Head of caudate nucleus (tissue), 42 donors: ENCODE measurements at regions of chr4 and their contacts with region 1.

Region 1: DNA sequence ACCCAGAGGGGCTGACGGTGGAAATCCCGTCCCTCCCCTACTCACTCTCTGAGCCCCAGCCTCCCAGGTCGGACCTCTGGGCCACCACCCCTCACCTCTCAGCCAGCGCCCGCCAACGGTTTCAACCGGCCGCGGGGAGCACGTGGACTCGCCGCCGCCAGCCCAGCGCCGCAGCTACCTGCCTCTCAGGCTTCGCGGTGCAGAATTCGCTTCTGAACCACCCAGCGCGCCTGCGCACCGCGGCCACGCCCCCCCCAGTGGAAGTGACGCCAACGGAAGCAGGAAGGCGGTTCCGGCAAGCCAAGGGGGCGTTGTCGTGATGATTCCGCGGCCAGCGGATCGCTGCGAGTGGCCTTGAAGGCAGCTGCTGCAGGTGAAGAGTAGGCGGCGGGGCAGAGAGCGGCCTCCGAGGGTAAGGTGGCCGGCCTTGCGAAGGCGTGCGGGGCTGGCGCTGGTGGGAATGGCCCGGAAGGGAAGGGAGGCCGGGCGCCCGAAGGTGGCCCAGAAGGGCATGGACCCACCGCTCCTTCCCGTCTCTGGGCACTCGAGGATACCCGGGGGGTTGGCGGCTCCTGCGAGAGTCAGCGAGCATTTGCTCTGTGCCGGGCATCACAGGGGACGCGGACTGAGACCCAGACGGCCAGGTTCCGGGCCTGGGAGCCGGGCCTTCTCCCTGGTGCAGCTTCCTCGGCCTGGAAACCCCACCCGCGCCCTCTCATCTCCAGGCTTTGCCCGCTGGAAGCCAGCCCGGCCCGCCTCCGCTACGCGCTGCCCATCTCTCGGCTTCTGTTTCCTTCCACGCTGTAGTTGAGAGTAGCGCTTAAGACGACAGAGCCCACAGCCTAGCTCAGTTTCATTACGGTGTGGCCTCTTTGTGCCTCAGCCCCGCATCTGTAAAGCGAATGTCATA is at the starts of genes LYAR and ZBTB49:
- DNase-seq: peak; percentile 84 to 97 (median 94)

Region 2: DNA sequence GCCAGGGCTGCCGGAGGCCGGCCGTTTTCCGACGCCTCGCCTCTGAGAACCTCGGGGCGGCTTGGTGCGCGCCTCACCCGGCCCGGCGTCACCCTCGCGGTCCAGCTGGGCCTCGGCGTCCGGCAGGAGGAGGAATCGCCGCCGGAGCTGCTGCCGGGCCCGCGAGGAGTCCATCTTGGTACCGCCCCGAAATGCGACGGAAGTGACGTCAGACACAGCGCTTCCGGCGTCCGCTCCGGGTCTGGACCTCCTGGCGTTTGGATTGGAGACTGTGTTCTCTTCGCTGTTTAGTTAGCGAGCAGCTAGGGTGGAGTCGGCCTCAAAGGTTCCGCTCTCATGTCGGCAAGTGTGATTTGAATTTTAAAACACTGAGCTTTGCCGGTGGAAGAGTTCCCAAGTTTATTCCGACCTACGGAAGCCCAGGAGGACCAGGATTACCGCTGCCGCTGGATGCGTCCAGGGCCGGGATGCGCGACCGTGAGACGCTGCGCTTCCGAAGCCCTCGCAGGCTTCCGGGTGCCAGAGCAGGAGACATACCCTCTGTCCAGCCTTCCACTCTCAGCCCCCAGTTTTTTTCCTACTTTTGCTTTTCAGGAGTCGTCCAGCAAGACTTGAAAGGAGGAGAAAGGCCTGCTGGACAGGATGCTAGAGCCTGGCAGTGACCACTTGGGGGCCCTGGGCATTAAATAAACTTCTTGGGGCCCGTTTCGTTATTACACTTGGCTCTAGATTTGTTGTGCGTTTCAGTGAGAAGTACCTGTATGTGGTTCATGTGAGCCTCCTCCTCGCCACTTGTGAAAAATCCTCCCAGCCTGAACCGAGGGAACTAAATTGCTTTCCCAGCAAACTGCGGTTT is 41.9 kb before region 1 on chr4 and contains the start of gene TMEM128:
- intact Hi-C with region 1: loop called (anchors 5 kb)
- DNase-seq: peak; percentile 92 to 98 (median 96)

Region 3: DNA sequence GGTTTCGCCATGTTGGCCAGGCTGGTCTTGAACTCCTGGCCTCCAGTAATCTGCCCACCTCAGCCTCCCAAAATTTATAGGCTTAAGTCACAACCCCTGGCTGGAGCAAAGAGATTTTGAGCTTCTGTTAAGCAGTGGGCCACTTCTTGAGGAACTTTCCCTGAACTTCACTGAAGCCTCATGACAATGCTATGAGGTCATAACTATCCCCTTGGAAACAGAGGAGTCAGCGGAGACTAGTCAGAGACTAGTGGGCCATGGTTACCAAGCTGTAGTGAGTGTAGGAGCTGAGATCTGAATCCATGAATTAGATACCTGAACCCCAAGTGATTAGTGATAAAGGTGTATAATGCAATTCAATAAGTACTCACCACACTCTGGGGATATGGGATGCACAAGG is 424.1 kb after region 1 on chr4:
- intact Hi-C with region 1: no loop called
- DNase-seq: no peak